ENCODE measurements at regions of chr17 and their contacts with region 1.

Region 1: DNA sequence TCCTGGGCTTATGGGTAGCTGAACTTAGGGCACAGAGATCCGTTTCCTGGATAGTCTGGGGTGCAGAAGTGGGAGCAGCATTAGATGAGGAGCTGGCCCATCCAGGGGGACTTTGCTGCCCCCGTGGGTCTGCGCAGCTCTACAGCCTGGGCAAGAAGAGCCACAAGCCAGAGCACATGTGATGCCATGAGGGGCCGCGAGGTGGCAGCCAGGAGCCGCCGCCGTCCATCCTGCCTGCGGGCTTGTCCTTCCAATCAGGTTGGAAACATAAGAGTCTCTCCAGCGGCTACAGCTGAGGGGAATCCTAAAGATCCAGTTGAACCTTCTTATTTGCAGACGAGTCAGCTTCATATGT is 21.9 kb downstream of the C1QTNF1 start:
- DNase-seq: peak; percentile 76
- H3K4me3 ChIP-seq: no peak overlapping the region
- H3K27ac ChIP-seq: no peak overlapping the region
- H3K4me1 ChIP-seq: peaks cover 13% of the 10 kb centered on the region
- H3K27me3 ChIP-seq: no peaks in the 10 kb centered on the region
- CTCF ChIP-seq: peak; percentile 94

Region 2: GRCh38 chr17:78970834-78971773 is 74.7 kb before region 1 on chr17:
- CTCF ChIA-PET with region 1: no interaction called
- POLR2A ChIA-PET with region 1: no interaction called
- intact Hi-C with region 1: no loop called
- DNase-seq: peak; percentile 80
- H3K4me3 ChIP-seq: no peak overlapping the region
- H3K27ac ChIP-seq: no peak overlapping the region
- H3K4me1 ChIP-seq: peaks cover 12% of the 10 kb centered on the region
- H3K27me3 ChIP-seq: no peaks in the 10 kb centered on the region
- CTCF ChIP-seq: peak; percentile 93

Region 3: GRCh38 chr17:79019632-79020584 is 25.9 kb before region 1 on chr17:
- CTCF ChIA-PET with region 1: interaction called, 10 read pairs
- POLR2A ChIA-PET with region 1: no interaction called
- intact Hi-C with region 1: loop called (anchors 1 kb)
- DNase-seq: peak; percentile 78
- H3K4me3 ChIP-seq: no peak overlapping the region
- H3K27ac ChIP-seq: no peak overlapping the region
- H3K4me1 ChIP-seq: peaks cover 8% of the 10 kb centered on the region
- H3K27me3 ChIP-seq: no peaks in the 10 kb centered on the region
- CTCF ChIP-seq: peak; percentile 79

Region 4: GRCh38 chr17:79082311-79083190 is 36.7 kb after region 1 on chr17:
- CTCF ChIA-PET with region 1: interaction called, 7 read pairs
- POLR2A ChIA-PET with region 1: no interaction called
- intact Hi-C with region 1: loop called (anchors 5 kb)
- DNase-seq: peak; percentile 44
- H3K4me3 ChIP-seq: no peak overlapping the region
- H3K27ac ChIP-seq: no peak overlapping the region
- H3K4me1 ChIP-seq: no peaks in the 10 kb centered on the region
- H3K27me3 ChIP-seq: no peaks in the 10 kb centered on the region
- CTCF ChIP-seq: peak; percentile 93